Activated T-helper 2 cell treated with anti-CD3 and anti-CD28 coated beads, Interferon-gamma antibody, Interleukin-2, Interleukin-4, amounts not matched to agents 10 μg/mL and 5 μg/mL and 100 μg/mL, durations not matched to agents 14 hours and 24 hours and 36 hours (primary cell): ENCODE measurements at regions of chr5 and their contacts with region 1.

Region 1: DNA sequence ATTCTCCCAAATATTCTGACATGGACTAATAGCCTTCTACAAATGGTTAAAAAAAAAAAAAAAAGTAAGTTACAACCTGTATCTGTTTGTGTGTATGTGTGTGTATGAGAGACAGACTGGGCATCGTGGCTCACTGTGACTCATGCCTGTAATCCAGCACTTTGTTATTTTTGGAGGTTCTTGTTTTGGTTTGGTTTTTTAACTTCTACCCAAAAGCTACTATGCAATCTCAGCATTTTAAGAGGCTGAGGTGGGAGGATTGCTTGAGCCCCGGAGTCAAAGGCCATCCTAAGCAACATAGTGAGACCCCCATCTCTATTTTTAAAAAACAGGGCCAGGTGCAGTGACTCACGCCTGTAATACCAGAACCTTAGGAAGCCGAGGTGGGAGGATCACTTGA is 17.6 kb upstream of the HAVCR1 start:
- DNase-seq: no peak
- H3K4me3 Mint-ChIP-seq: no peak overlapping the region
- H3K27ac Mint-ChIP-seq: no peak overlapping the region
- H3K4me1 Mint-ChIP-seq: peaks cover 37% of the 10 kb centered on the region
- H3K27me3 Mint-ChIP-seq: no peaks in the 10 kb centered on the region

Region 2: DNA sequence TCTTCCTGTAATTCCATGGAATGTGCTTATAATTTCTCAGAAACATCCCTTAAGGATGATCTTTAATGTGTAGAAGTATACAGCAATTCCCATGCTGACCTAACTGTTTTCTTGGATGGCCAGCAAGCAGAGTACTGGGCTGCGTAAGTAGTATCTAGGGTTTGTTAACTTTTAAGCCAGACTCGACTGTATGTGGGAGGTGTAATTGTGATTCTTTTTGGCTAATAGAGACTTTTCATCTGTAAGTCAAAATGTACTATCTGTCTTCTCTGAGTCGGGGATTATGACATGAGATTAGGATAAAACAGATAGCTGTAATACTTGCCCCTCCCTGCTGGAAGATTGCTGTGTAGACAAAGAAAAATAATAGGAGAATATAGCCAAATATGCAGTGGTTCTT is 580.3 kb before region 1 on chr5:
- intact Hi-C with region 1: no loop called
- DNase-seq: no peak
- H3K4me3 Mint-ChIP-seq: no peak overlapping the region
- H3K27ac Mint-ChIP-seq: no peak overlapping the region
- H3K4me1 Mint-ChIP-seq: no peaks in the 10 kb centered on the region
- H3K27me3 Mint-ChIP-seq: peaks cover 2% of the 10 kb centered on the region

Region 3: DNA sequence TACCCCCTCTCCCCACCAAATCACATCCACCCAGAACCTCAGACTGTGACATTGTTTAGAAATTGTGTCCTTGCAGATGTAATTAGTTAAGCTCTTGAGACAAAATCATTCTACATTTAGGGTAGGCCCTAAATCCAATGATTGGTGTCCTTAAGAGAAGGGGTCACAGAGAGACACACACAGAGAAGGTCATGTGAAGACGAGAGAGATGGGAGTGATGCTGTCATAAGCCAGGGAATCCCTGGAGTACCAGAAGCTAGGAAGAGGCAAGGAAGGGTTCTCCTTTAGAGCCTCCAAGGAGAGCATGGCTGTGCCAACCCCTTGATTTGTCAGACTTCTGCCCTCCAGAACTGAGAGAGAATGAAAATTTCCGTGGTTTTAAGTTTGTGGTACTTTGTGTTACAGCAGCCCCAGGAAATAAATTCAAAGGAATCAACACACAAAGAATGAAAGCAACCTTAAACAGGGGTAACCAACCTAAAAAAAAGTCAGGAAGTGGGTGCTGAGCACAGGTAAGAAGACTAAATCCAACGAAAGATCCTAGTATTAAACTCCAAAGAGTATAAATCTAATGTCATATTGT is 147.1 kb before region 1 on chr5:
- intact Hi-C with region 1: loop called (anchors 1 kb)
- DNase-seq: no peak
- H3K4me3 Mint-ChIP-seq: no peak overlapping the region
- H3K27ac Mint-ChIP-seq: peak overlapping the region; percentile 89
- H3K4me1 Mint-ChIP-seq: peaks cover 63% of the 10 kb centered on the region
- H3K27me3 Mint-ChIP-seq: no peaks in the 10 kb centered on the region

Region 4: GRCh38 chr5:157033071-157033583 is 43.4 kb before region 1 on chr5:
- intact Hi-C with region 1: loop called (anchors 1 kb)
- DNase-seq: no peak
- H3K4me3 Mint-ChIP-seq: no peak overlapping the region
- H3K27ac Mint-ChIP-seq: peak overlapping the region; percentile 80
- H3K4me1 Mint-ChIP-seq: peaks cover 65% of the 10 kb centered on the region
- H3K27me3 Mint-ChIP-seq: no peaks in the 10 kb centered on the region

Region 5: DNA sequence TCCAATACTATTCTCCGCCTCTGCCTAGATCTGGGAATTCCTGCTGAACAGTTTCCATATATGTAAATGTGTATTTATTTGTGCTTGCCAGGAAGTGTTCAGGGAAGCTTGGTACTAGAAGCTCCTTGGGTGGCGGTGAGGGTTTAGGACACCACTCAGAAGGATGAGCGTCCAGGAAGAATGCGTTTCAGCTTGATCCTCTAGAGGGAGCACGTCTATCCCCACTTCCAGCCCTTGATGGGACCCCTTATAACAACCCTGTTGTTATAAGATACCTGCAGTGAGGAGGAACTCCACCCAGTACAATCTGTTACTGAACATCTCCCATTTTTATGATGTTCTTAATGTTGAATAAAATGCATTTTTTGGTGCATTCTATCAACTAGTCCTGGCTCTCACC is 278.2 kb after region 1 on chr5:
- intact Hi-C with region 1: no loop called
- DNase-seq: no peak
- H3K4me3 Mint-ChIP-seq: no peak overlapping the region
- H3K27ac Mint-ChIP-seq: no peak overlapping the region
- H3K4me1 Mint-ChIP-seq: peaks cover 35% of the 10 kb centered on the region
- H3K27me3 Mint-ChIP-seq: no peaks in the 10 kb centered on the region

Region 6: GRCh38 chr5:157378502-157378901 is 301.9 kb after region 1 on chr5:
- intact Hi-C with region 1: no loop called
- DNase-seq: no peak
- H3K4me3 Mint-ChIP-seq: no peak overlapping the region
- H3K27ac Mint-ChIP-seq: no peak overlapping the region
- H3K4me1 Mint-ChIP-seq: peaks cover 6% of the 10 kb centered on the region
- H3K27me3 Mint-ChIP-seq: no peaks in the 10 kb centered on the region

Region 7: DNA sequence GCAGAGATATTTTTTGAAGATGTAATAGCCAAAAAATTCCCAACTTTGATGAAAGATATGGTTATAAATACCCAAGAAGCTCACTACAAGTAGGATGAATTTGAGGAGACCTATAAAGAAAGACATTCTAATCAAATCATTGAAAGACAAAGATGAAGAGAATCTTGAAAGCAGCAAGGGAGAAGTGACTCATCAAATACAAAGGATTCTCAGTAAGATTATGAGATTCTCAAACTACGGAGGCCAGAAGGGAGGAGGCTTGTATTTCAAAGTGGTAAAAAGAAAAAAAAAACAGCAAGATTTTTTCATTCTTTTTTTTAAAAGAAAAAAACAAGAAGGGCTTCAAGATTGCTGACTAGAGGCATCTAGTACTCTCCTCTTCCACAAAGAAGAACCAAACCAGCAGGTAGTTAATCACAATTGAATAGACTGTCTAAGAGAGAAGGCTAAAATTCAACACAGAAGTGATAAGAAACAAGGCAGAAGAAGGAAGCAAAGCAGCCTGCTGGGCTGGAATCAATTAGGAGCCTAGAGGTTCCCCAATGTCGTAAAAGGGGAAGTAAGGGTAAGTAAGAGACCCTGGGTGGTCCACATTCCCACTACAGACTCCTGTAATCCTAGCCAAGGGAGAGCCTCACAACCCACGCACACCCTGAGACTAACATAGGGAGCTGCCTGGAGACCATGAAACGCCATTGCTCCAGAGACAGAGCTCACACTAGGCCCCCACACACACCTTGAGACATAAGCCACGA is 324.4 kb after region 1 on chr5:
- intact Hi-C with region 1: no loop called
- DNase-seq: no peak
- H3K4me3 Mint-ChIP-seq: no peak overlapping the region
- H3K27ac Mint-ChIP-seq: peak overlapping the region; percentile 38
- H3K4me1 Mint-ChIP-seq: peaks cover 10% of the 10 kb centered on the region
- H3K27me3 Mint-ChIP-seq: peaks cover 8% of the 10 kb centered on the region